ENCODE measurements at regions of chr18 and their contacts with region 1.

Region 1: DNA sequence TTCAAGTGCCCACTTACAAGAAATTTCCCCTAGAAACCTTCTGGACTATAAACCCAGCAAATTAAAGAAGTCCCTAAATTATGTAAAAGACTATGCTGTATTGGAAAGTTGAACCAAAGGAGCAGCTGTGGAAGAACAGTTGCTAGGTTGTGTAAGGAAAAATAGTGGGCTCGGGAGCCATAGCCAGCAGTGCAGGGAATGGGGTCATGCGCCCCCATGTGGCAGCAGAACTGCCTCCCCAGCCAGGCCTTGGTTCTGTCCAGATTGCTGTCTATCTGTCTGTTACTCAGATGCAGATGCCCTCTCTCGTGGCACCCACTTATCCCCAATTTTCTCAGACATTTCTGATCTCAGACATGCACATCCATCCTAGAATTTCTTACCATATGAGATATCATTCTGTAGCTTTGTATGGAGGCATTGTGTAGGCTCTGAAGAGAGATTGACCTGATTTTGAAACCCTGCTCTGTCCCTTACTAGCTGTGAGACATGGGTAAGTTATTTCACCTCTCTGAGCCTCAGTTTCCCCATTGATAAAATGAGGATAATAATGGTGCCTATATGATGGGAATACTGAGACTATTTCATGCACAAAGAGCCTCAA is 258.3 kb downstream of the SS18 start:
- DNase-seq: peak; percentile 55 to 79
- H3K4me3 ChIP-seq: no peak overlapping the region
- H3K27ac ChIP-seq: no peak overlapping the region
- H3K4me1 ChIP-seq: peaks cover 0 to 15% (median 2%) of the 10 kb centered on the region in 4 donors
- H3K27me3 ChIP-seq: no peaks in the 10 kb centered on the region
- CTCF ChIP-seq: peak in 5 of 7 experiments; percentile 28 to 70 (median 48)
- EP300 ChIP-seq: no peak
- POLR2A ChIP-seq: no peak

Region 2: GRCh38 chr18:24878289-24878688 is 953.8 kb before region 1 on chr18:
- intact Hi-C with region 1: loop called (anchors 10 kb)
- DNase-seq: peak in 1 of 2 donors; percentile 80
- H3K4me3 ChIP-seq: no peak overlapping the region
- H3K27ac ChIP-seq: no peak overlapping the region
- H3K4me1 ChIP-seq: no peaks in the 10 kb centered on the region
- H3K27me3 ChIP-seq: no peaks in the 10 kb centered on the region
- CTCF ChIP-seq: peak in 4 of 7 experiments; percentile 29 to 48 (median 36)
- EP300 ChIP-seq: no peak
- POLR2A ChIP-seq: no peak

Region 3: DNA sequence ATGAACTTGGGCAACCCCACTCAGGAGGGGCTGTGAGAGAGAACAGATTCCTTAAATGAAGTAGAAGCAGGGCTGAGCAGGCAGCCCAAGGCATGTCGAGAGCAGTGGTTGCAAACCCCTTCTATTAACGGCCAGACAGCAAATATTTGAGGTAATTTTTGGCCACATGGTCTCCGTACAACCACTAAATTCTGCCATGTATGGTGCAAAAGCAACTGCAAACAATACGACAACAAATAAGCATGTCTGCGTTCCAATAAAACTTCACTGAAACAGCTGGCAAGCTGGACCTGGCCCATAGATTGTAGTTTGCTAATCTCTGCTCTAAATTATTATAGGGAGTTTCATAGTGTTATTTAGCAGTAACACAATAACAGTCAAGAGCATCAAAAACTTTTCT is 263.1 kb before region 1 on chr18:
- intact Hi-C with region 1: no loop called
- DNase-seq: no peak
- H3K4me3 ChIP-seq: no peak overlapping the region
- H3K27ac ChIP-seq: no peak overlapping the region
- H3K4me1 ChIP-seq: no peaks in the 10 kb centered on the region
- H3K27me3 ChIP-seq: no peaks in the 10 kb centered on the region
- CTCF ChIP-seq: no peak
- EP300 ChIP-seq: no peak
- POLR2A ChIP-seq: no peak

Region 4: DNA sequence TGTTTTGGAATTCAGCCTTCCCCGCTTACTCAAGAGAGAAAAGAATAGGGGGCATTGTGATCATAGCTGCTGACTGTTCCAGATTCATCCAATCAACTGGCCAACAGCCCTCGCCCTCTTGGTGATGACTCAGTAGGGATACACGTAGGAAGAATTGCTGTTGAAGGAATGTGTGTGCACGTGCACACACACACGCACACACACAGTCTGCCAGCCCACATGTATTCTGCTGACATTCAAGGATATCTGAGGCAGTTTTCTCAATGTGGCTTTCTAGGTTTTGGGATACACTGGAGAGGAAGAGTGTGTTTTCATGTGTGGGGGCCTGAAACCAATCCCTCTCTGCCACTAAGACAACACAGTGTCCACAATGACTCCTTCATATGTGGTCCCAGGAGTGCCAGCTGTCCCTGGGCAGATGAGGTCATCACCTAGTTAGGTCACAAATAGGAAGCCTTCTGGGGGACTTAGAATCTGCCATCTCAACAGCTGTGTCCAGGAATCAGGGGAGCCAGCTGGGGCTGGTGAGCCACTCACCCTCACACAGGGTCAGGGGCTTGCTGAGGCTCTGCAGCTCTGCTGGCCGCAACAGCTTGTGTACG is 94.3 kb before region 1 on chr18:
- intact Hi-C with region 1: no loop called
- DNase-seq: no peak
- H3K4me3 ChIP-seq: no peak overlapping the region
- H3K27ac ChIP-seq: no peak overlapping the region
- H3K4me1 ChIP-seq: no peaks in the 10 kb centered on the region
- H3K27me3 ChIP-seq: peaks cover 0 to 8% (median 0%) of the 10 kb centered on the region in 3 donors
- CTCF ChIP-seq: no peak
- EP300 ChIP-seq: no peak
- POLR2A ChIP-seq: no peak